Gastrocnemius medialis (tissue), 4 donors: ENCODE measurements at regions of chr13 and their contacts with region 1.

Region 1: DNA sequence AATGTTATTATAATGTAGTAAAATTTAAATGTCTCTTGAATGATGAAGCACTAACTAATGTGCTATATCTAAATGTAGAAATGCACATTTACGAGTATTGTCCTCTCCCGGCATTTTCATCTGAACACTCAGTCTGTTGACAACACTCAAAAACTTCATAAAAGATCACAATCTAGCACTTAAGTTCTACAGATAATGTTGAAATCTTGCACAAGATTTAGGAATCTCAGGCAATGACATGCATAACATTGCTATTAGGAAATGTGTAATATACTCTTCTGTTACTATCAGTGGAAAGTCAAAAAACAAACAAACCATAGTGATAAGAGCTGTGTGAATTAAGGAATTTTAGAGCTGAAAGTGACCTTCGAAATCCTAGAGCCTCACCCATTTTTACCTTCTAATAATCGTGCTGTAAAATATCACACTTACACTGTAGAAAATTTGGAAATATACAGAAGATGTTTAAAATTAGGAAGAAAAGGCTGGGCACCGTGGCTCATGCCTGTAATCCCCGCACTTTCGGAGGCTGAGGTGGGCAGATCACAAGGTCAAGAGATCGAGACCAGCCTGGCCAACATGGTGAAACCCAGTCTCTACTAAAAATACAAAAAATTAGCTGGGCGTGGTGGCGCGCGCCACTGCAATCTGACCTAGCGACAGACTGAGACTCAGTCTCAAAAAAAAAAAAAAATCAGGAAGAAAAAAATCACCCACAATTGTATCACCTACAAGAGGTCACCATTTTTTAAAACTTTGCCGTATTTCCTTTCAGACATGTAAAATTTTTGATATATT is 37.7 kb upstream of the XPO4 start:
- DNase-seq: no peak
- ATAC-seq: no peak
- H3K4me3 ChIP-seq: no peak overlapping the region
- H3K27ac ChIP-seq: peak overlapping the region; percentile 73 to 91 (median 80)
- H3K4me1 ChIP-seq: peaks cover 20 to 24% of the 10 kb centered on the region in 2 donors
- H3K27me3 ChIP-seq: no peaks in the 10 kb centered on the region
- CTCF ChIP-seq: no peak
- POLR2A ChIP-seq: no peak

Region 2: DNA sequence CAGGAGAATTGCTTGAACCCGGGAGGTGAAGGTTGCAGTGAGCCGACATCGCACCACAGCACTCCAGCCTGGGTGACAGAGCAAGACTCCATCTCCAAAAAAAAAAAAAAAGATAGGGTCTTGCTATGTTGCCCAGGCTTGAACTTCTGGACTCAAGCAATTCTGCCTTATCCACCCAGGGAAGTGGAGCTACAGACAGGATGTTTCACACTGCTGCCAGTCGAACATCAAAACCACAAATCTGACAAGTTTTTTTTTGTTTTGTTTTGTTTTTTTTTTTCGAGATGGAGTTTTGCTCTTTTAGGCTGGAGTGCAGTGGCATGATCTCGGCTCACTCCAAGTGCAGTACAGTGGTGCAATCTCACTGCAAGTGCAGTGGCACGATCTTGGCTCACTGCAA is 48.5 kb before region 1 on chr13:
- in situ Hi-C with region 1: no loop called
- intact Hi-C with region 1: no loop called
- DNase-seq: no peak
- ATAC-seq: no peak
- H3K4me3 ChIP-seq: no peak overlapping the region
- H3K27ac ChIP-seq: no peak overlapping the region
- H3K4me1 ChIP-seq: peaks cover 9 to 11% of the 10 kb centered on the region in 2 donors
- H3K27me3 ChIP-seq: no peaks in the 10 kb centered on the region
- CTCF ChIP-seq: no peak
- POLR2A ChIP-seq: no peak

Region 3: DNA sequence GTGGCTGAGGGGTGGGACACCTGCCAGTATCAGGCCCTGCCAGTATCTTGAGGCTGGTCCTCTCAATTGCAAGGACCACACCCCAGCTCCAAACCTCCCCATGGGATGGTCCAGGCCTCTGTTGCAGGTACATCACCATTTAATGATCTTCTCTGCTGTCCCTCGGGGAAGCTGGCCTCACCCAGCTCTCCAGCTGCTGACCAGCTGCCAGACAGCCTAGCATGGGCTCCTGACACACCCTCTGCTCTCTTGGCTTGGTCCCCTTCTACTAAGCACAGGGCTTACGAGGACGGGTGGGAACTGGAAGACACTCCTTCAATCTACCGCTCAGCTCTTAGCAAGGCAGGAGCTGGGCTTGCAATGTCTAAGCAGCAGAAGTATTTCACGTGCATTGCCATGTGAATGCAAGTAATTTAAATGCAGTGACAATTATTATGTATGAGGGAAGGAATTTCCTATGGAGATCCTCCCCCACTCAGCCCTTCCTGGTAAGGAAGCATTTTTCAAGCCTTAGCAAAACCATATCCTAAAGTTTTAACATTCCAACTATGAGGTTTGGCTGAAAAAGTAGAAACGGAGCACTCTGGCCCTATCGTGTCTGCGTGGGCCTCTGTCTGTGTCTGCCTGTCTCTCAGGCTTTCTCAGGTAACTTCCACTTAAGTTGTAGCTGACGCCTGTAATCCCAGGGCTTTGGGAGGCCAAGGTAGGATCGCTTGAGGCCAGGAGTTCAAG is 57.3 kb after region 1 on chr13:
- in situ Hi-C with region 1: no loop called
- intact Hi-C with region 1: loop called (anchors 5 kb)
- DNase-seq: peak in 1 of 2 donors; percentile 48
- ATAC-seq: no peak
- H3K4me3 ChIP-seq: no peak overlapping the region
- H3K27ac ChIP-seq: peak overlapping the region; percentile 77 to 90 (median 87)
- H3K4me1 ChIP-seq: peaks cover 41 to 50% of the 10 kb centered on the region in 2 donors
- H3K27me3 ChIP-seq: no peaks in the 10 kb centered on the region
- CTCF ChIP-seq: no peak
- POLR2A ChIP-seq: no peak

Region 4: GRCh38 chr13:21069561-21070004 is 129.3 kb after region 1 on chr13:
- in situ Hi-C with region 1: loop called in 3 of 4 experiments (anchors 5 to 10 kb)
- intact Hi-C with region 1: no loop called
- DNase-seq: peak; percentile 38 to 57
- ATAC-seq: peak; percentile 91 to 99
- H3K4me3 ChIP-seq: peak overlapping the region in 1 of 4 donors; percentile 21
- H3K27ac ChIP-seq: peak overlapping the region; percentile 43 to 68 (median 52)
- H3K4me1 ChIP-seq: peaks cover 12 to 16% of the 10 kb centered on the region in 2 donors
- H3K27me3 ChIP-seq: no peaks in the 10 kb centered on the region
- CTCF ChIP-seq: no peak
- POLR2A ChIP-seq: no peak

Region 5: GRCh38 chr13:21123956-21124355 is 183.7 kb after region 1 on chr13:
- in situ Hi-C with region 1: no loop called
- intact Hi-C with region 1: no loop called
- DNase-seq: no peak
- ATAC-seq: no peak
- H3K4me3 ChIP-seq: no peak overlapping the region
- H3K27ac ChIP-seq: no peak overlapping the region
- H3K4me1 ChIP-seq: no peaks in the 10 kb centered on the region
- H3K27me3 ChIP-seq: no peaks in the 10 kb centered on the region
- CTCF ChIP-seq: no peak
- POLR2A ChIP-seq: no peak

Region 6: GRCh38 chr13:21176220-21176982 is 236.1 kb after region 1 on chr13 and contains the starts of genes MRPL57 and SKA3:
- in situ Hi-C with region 1: no loop called
- intact Hi-C with region 1: loop called (anchors 2 kb)
- DNase-seq: peak; percentile 83 to 91
- ATAC-seq: peak; percentile 98
- H3K4me3 ChIP-seq: peak within 1 kb of the TSS; percentile 71 to 97 (median 84)
- H3K27ac ChIP-seq: peak within 1 kb of the TSS; percentile 87 to 95 (median 92)
- H3K4me1 ChIP-seq: peaks cover 12 to 21% of the 10 kb centered on the region in 2 donors
- H3K27me3 ChIP-seq: no peaks in the 10 kb centered on the region
- CTCF ChIP-seq: peak in 3 of 5 experiments; percentile 10 to 51 (median 27)
- POLR2A ChIP-seq: peak; percentile 83 to 85
- total RNA-seq, gene MRPL57: 32.1 to 53.8 (median 47.6) TPM
- total RNA-seq, gene SKA3: 0.13 to 0.24 TPM in 2 of 4 donors, not detected in the others

Region 7: GRCh38 chr13:21297914-21298831 is 357.9 kb after region 1 on chr13:
- in situ Hi-C with region 1: loop called in 1 of 4 experiments (anchors 5 kb)
- intact Hi-C with region 1: loop called (anchors 2 kb)
- DNase-seq: peak; percentile 38 to 68
- ATAC-seq: peak; percentile 98 to 99
- H3K4me3 ChIP-seq: peak overlapping the region; percentile 76 to 100 (median 90)
- H3K27ac ChIP-seq: peak overlapping the region; percentile 29 to 65 (median 47)
- H3K4me1 ChIP-seq: peaks cover 11 to 14% of the 10 kb centered on the region in 2 donors
- H3K27me3 ChIP-seq: no peaks in the 10 kb centered on the region
- CTCF ChIP-seq: peak; percentile 78 to 91 (median 80)
- POLR2A ChIP-seq: no peak

Region 8: GRCh38 chr13:21625366-21625765 is 685.1 kb after region 1 on chr13:
- in situ Hi-C with region 1: no loop called
- intact Hi-C with region 1: no loop called
- DNase-seq: no peak
- ATAC-seq: no peak
- H3K4me3 ChIP-seq: no peak overlapping the region
- H3K27ac ChIP-seq: no peak overlapping the region
- H3K4me1 ChIP-seq: no peaks in the 10 kb centered on the region
- H3K27me3 ChIP-seq: no peaks in the 10 kb centered on the region
- CTCF ChIP-seq: no peak
- POLR2A ChIP-seq: no peak